ENCODE measurements at regions of chr11 and their contacts with region 1.

Region 1: GRCh38 chr11:73779084-73779902 is 8.4 kb upstream of the MRPL48 start:
- DNase-seq: peak; percentile 99

Region 2: DNA sequence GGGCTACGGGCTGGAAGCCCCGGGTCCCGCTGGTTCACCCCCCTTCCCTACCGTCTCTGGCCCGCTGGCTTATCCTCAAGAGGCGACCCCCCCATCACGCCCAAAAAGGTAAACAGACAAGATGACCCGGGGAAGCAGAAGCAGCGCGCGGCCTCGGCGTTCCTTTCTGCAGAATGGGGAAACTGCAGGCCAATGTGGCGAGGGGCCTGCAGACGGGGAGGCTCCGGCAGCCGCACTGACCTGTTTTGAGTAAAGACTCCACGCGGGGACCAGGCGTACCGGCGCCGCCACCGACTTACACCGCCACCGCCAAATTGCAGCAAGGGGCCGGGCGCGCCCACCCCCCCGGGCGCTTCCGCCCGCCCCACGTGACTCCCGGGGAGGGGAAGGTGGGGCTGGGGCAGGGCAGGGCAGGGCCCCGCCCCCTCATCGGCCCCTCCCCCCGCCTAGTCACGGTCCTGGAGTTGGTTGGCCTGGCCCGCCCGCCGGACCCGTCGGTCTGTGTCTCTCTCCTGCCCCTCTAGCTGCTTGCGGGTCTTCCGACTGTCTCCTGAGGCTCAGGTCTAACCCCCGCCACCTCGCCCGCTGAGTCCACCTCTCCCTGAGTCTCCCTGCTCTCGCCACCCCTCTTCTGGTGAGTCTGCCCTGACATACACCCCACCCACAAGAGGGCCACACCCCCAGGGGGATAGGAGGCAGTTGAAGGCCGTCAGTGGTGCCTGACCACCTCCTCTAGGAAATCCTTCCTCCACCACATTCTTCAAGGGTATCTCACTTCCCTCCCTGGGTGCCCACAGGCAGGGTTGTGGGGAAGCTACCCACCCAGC is 1027.0 kb before region 1 on chr11 and contains the start of gene ARAP1:
- intact Hi-C with region 1: no loop called
- DNase-seq: peak; percentile 89
- total RNA-seq, gene ARAP1: 46.3 TPM

Region 3: DNA sequence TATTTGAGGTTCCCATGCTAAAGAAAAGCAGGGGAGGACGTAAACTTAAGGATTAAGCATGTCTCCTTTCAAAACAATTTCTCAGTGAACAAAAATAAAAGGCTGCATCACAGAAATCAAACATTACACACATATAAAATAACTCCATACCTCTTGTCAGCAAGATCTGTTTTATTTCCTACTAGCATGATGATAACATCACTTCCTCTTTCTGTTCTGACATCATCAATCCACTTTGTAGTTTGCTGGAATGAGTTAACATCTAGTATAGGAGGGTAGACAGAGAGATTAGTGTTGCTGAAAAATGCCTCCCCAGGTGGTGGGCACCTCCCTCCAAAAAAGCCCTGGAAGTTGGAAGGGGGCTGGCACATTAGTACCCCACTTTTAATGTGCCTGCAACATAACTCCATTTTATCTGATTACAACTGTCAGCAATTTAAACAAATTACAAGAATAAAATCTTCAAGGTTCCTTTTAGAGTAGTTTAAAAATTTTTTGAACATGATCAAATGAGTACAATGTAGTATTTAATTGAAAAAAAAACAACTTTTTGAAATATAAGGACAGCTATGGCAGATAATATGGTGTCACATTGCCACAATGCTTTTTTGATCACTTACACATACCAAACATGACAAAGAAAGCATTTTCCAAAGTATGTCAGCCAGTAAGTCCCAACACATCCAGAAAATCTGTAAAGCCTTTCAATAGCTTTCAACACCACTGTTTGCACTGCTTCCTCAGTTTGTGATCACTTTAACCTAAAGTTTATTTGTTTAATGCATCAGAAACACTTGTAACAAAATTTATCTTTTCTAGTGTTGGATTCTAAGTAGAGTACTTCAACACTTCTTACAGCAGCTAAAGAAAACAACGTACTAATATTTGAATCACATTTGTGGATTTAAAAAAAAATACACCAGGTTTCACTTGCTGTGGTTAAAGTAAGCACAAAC is 62.9 kb before region 1 on chr11:
- intact Hi-C with region 1: no loop called
- DNase-seq: no peak

Region 4: DNA sequence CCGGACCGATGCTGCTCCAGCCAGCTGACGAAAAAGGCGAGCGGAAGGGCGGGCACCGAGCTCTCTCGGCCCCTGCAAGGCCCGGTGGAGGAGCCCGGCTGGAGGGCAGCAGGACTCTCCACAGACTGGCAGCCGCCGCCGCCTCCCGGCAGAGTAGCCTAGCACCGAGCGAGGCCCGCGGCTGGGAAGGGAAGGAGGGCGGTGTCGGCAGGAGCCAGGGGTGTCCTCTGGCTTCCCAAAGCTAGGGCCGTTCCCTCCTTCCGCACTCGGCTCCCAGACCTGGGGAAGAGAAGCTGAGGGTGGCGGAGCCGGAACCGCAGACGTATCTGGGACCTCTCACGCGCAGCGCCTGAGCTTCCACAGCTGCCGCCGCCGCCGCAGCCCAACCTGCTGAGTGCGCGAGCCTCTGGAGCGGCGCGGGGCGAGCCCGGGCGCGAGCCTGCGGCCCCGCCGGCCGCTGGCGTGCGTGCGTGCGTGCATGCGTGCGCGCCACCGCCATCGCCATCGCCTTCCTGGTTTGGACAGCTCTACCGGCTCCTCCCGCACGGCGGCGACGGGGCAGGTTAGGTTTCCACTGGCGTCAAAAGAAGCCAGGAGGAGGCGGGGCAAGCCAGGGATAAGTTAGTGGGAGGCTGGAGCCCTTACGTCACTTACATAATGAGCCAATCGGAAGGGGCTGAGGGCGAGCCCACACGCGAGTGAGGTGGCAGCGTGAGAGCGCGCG is 18.5 kb before region 1 on chr11 and contains the start of gene RAB6A:
- intact Hi-C with region 1: loop called (anchors 1 kb)
- DNase-seq: peak; percentile 100
- total RNA-seq, gene RAB6A: 135 TPM

Region 5: GRCh38 chr11:74147199-74147929 is 368.1 kb after region 1 on chr11:
- intact Hi-C with region 1: no loop called
- DNase-seq: no peak